Activated CD4-positive, alpha-beta T cell treated with anti-CD3 and anti-CD28 coated beads, Interleukin-2, amount 10 ng/mL, durations not matched to agents 24 days and 14 days (primary cell): ENCODE measurements at regions of chr5 and their contacts with region 1.

Region 1: DNA sequence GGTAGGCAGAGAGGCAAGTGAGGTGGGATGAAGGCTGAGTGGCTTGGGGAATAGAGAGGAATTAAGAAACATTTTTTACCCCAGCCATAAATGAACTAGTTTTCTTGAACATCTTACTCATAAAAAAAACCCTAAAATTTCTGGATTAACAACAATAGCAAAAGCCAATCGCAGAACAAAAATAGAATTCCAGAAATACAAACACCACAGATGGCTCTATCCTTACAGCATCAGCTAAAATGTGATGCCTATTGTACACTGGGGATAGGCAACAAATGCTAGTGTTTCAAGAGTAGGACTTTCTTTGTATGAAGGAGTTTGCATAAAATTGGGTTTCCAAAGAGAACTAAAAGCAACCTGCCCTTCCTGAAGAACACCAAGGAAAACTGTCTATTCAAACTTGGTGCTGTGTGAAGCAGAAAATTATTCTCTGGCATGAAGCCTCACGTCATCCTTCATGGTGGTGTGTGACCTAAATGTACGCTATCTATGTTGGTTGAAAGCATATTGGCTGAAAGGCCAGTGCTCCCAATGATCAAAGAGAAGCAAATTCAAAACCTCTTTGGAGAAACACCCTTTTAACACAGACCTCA is 82.9 kb downstream of the JAKMIP2 start:
- DNase-seq: peak; percentile 7
- H3K4me3 Mint-ChIP-seq: no peak overlapping the region
- H3K27ac Mint-ChIP-seq: no peak overlapping the region
- H3K4me1 Mint-ChIP-seq: no peaks in the 10 kb centered on the region
- H3K27me3 Mint-ChIP-seq: no peaks in the 10 kb centered on the region

Region 2: GRCh38 chr5:147643142-147643541 is 56.5 kb before region 1 on chr5:
- intact Hi-C with region 1: no loop called
- DNase-seq: no peak
- H3K4me3 Mint-ChIP-seq: no peak overlapping the region
- H3K27ac Mint-ChIP-seq: no peak overlapping the region
- H3K4me1 Mint-ChIP-seq: no peaks in the 10 kb centered on the region
- H3K27me3 Mint-ChIP-seq: no peaks in the 10 kb centered on the region

Region 3: GRCh38 chr5:147673266-147673665 is 26.3 kb before region 1 on chr5:
- intact Hi-C with region 1: loop called (anchors 1 kb)
- DNase-seq: no peak
- H3K4me3 Mint-ChIP-seq: no peak overlapping the region
- H3K27ac Mint-ChIP-seq: no peak overlapping the region
- H3K4me1 Mint-ChIP-seq: no peaks in the 10 kb centered on the region
- H3K27me3 Mint-ChIP-seq: no peaks in the 10 kb centered on the region